ENCODE measurements at regions of chr11 and their contacts with region 1.

Region 1: DNA sequence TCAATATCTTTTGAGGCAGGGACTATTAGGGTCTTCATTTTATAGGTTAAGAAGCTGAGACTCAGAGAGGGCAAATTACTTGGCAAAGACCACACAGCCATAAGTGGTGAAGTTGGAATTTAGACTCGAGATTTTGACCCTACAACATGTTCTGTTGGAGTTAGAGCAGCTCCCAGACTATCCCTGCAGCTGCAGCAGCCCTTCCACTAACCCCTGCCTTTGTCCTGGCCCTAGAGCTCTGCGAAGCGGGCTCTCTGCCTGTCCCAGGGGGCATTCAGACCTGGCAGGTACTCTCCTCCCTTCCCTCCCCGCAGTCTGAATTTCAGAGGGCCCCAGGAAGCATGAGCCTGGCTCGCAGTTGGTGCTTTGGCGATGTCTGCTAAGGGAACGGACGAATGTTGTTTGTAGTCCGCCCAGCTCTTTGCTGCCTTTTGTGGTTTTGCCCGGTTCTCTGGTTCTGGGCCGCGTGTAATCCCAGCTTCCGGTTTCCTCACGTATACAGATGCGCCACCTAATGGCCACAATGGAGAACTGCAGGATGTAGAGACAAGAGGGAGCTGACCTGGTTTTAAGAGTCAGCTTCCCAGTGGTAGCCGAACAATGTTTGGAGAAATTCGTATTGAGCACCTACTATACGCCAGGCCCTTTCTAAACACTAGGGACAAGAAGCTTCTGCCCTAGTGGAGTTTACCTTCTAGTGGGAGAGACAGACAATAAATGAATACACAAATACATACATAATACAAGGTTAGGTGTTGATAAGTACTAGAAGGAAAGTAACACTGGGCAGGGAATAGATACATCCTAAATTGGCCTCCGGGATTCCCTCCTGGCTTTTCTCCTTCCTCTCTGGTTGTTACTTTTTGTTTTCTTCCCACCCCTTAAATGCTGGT is 125.2 kb downstream of the ST3GAL4 start:
- DNase-seq: peak; percentile 90
- ATAC-seq: peak; percentile 93

Region 2: GRCh38 chr11:126310228-126310991 is 170.2 kb before region 1 on chr11:
- intact Hi-C with region 1: loop called (anchors 2 kb)
- DNase-seq: peak; percentile 89
- ATAC-seq: peak; percentile 93

Region 3: GRCh38 chr11:126592496-126593410 is 112.1 kb after region 1 on chr11:
- intact Hi-C with region 1: no loop called
- DNase-seq: no peak
- ATAC-seq: no peak

Measured in sciatic nerve (tissue), 2 donors.